ENCODE measurements at regions of chr9 and their contacts with region 1.

Region 1: GRCh38 chr9:122264360-122265148 is at the starts of genes MRRF and RBM18:
- DNase-seq: peak; percentile 93
- ATAC-seq: peak; percentile 83
- H3K4me3 Mint-ChIP-seq: peak within 1 kb of the TSS; percentile 98
- H3K27ac Mint-ChIP-seq: peak within 1 kb of the TSS; percentile 99
- H3K4me1 Mint-ChIP-seq: peaks cover 44% of the 10 kb centered on the region
- H3K27me3 Mint-ChIP-seq: no peaks in the 10 kb centered on the region
- total RNA-seq, gene MRRF: 57.3 to 61.5 TPM
- total RNA-seq, gene RBM18: 22.3 to 28.6 TPM

Region 2: DNA sequence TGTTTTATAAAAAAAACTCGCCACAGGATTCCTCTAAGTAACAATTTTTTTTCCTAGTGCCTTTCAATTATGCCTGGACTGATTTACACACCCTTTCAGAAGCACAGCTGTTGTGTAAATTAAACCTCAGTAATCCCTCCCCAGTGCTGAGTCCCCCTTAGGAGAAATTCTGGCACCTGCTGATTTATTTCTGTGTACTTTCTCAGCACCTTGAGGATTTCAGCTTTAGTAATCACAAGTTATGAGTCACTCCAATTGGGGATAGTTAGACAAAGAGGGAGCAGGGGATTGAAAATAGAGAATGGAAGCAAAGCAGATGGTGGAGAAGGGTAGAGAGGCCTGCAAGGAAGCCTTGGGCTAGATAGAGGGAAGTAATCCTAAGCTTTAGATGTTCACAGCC is 343.1 kb before region 1 on chr9:
- CTCF ChIA-PET with region 1: no interaction called
- POLR2A ChIA-PET with region 1: no interaction called
- intact Hi-C with region 1: no loop called
- DNase-seq: no peak
- ATAC-seq: no peak
- H3K4me3 Mint-ChIP-seq: no peak overlapping the region
- H3K27ac Mint-ChIP-seq: no peak overlapping the region
- H3K4me1 Mint-ChIP-seq: no peaks in the 10 kb centered on the region
- H3K27me3 Mint-ChIP-seq: no peaks in the 10 kb centered on the region

Region 3: DNA sequence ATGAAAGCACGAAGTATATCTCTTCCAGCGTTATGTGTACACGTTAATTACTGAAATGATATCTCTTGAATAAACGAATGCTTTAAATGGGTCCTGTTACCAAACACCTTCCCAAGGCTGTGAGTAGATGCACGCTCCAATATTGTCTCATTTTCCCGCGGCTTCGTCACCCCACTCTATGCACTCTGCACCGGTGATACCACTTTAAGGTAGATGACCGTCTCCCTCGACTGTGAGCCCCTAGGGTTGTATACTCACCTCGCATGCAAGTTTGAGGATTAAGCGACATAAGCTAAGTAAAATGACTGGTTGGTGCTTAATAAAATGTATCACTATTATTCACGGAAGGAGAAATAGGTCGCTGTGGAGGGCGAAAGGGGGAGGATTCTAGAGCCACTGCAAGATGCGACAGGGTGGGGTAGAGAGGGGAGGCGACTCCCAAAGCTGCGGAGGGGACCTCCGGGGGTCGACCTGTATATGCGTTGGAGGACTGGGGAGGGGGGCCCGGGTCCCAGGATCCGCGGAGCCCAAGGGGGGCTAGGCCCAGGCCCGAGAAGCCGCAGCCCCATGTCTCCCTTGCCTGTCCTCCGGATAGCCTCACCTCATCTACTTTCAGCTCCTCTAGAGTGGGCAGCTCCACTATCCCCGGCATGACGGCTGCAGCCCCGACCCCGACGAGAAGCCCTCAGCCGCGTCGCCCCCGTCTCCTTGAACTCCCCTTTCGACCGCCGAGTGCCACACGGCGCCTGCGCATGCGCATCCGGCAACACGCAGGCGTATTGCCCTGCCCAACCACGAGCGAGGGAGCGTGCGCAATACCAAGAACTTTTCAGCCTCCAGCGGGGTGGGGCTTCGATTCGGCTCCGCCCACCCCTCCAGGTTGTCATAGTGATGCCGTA is 105.3 kb before region 1 on chr9 and contains the starts of genes MORN5 and NDUFA8:
- CTCF ChIA-PET with region 1: no interaction called
- POLR2A ChIA-PET with region 1: no interaction called
- intact Hi-C with region 1: loop called (anchors 1 kb)
- DNase-seq: peak; percentile 98
- ATAC-seq: peak; percentile 97
- H3K4me3 Mint-ChIP-seq: peak within 1 kb of the TSS; percentile 95
- H3K27ac Mint-ChIP-seq: peak within 1 kb of the TSS; percentile 96
- H3K4me1 Mint-ChIP-seq: peaks cover 33% of the 10 kb centered on the region
- H3K27me3 Mint-ChIP-seq: peaks cover 13% of the 10 kb centered on the region
- total RNA-seq, gene MORN5: not detected
- total RNA-seq, gene NDUFA8: 50.4 to 57.2 TPM

Region 4: GRCh38 chr9:122940603-122941559 is 676.3 kb after region 1 on chr9 and contains the start of gene RABGAP1:
- CTCF ChIA-PET with region 1: no interaction called
- POLR2A ChIA-PET with region 1: no interaction called
- intact Hi-C with region 1: loop called in 1 of 2 experiments (anchors 2 kb)
- DNase-seq: peak; percentile 99
- ATAC-seq: peak; percentile 99
- H3K4me3 Mint-ChIP-seq: peak within 1 kb of the TSS; percentile 99
- H3K27ac Mint-ChIP-seq: peak within 1 kb of the TSS; percentile 95
- H3K4me1 Mint-ChIP-seq: peaks cover 33% of the 10 kb centered on the region
- H3K27me3 Mint-ChIP-seq: no peaks in the 10 kb centered on the region
- total RNA-seq, gene RABGAP1: 24.3 to 27.2 TPM